ENCODE measurements at regions of chr3 and their contacts with region 1.

Region 1: GRCh38 chr3:188853856-188854771 is 317.7 kb upstream of the TPRG1 start:
- DNase-seq: peak in 1 of 10 donors; percentile 10
- H3K4me3 ChIP-seq: peak overlapping the region in 2 of 59 donors; percentile 1
- H3K27ac ChIP-seq: peak overlapping the region in 55 of 59 donors; percentile 12 to 86 (median 69)
- H3K27me3 ChIP-seq: no peaks in the 10 kb centered on the region
- CTCF ChIP-seq: peak in 17 of 56 donors; percentile 5 to 60 (median 21)

Region 2: DNA sequence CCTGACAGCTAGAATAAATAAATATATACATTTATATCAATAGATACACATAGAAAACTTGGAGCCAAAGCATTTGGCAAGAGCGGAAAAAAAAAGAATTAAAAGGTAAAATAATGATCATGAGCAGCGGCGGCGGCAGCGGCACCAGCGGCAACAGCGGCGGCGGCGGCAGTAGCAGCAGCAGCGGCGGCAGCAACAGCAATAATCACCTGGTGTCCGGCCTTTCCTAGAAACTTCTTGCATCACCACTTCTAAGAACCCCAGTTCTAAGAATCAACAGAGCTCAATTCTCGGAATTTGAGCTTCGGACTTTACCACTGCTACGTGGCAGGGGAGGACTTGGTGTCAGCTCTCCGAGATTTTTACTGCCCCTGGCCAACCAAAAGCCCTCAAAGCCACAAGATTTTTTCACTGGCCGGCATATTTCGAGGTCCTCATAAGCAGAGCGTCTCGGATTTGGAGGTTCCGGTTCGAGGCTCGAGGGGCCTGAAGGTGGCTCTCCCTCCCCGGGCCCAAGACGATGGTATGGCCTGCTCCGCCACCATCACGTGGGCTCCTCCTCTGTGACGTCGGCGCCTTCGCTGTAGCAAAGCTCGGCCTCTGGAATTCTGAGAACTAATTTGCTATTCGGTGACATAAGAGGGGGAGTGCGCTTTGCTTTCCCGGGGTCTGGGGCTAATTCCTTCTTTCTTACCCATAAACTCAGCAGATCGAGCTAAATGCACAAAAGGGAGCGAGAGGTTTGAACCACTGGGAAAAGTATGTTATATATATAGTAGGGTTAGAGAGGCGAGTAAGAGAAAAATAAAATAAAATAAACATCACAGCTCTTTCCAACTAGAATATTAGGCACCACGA is 1108.7 kb before region 1 on chr3 and contains the start of gene BCL6:
- intact Hi-C with region 1: loop called in 1 of 2 experiments (anchors 5 kb)
- DNase-seq: peak; percentile 82 to 92 (median 90)
- H3K4me3 ChIP-seq: peak within 1 kb of the TSS; percentile 55 to 98 (median 83)
- H3K27ac ChIP-seq: peak within 1 kb of the TSS; percentile 87 to 100 (median 99)
- H3K27me3 ChIP-seq: no peaks in the 10 kb centered on the region
- CTCF ChIP-seq: peak in 13 of 56 donors; percentile 1 to 27 (median 9)
- total RNA-seq, gene BCL6: 47.6 to 270 (median 94.0) TPM

Region 3: GRCh38 chr3:188916934-188917401 is 62.9 kb after region 1 on chr3:
- intact Hi-C with region 1: no loop called
- DNase-seq: no peak
- H3K4me3 ChIP-seq: no peak overlapping the region
- H3K27ac ChIP-seq: peak overlapping the region in 1 of 59 donors; percentile 44
- H3K27me3 ChIP-seq: no peaks in the 10 kb centered on the region
- CTCF ChIP-seq: no peak

Region 4: GRCh38 chr3:189458532-189458931 is 604.4 kb after region 1 on chr3:
- intact Hi-C with region 1: no loop called
- DNase-seq: no peak
- H3K4me3 ChIP-seq: no peak overlapping the region
- H3K27ac ChIP-seq: no peak overlapping the region
- H3K27me3 ChIP-seq: peaks cover 0 to 6% (median 0%) of the 10 kb centered on the region in 45 donors
- CTCF ChIP-seq: no peak

Measured in dorsolateral prefrontal cortex (tissue), 120 donors.